CD8-positive, alpha-beta T cell (primary cell): ENCODE measurements at regions of chr3 and their contacts with region 1.

Region 1: GRCh38 chr3:161230621-161231171 is 9.6 kb downstream of the NMD3 start:
- DNase-seq: no peak
- ATAC-seq: no peak
- H3K4me3 ChIP-seq: no peak overlapping the region
- H3K4me3 Mint-ChIP-seq: no peak overlapping the region
- H3K27ac ChIP-seq: no peak overlapping the region
- H3K27ac Mint-ChIP-seq: no peak overlapping the region
- H3K4me1 ChIP-seq: no peaks in the 10 kb centered on the region
- H3K4me1 Mint-ChIP-seq: peaks cover 8% of the 10 kb centered on the region
- H3K27me3 ChIP-seq: no peaks in the 10 kb centered on the region
- H3K27me3 Mint-ChIP-seq: no peaks in the 10 kb centered on the region
- CTCF ChIP-seq: no peak

Region 2: GRCh38 chr3:161096771-161097355 is 133.8 kb before region 1 on chr3:
- CTCF ChIA-PET with region 1: no interaction called
- POLR2A ChIA-PET with region 1: no interaction called
- intact Hi-C with region 1: no loop called
- DNase-seq: peak in 3 of 9 experiments; percentile 19 to 40 (median 28)
- ATAC-seq: no peak
- H3K4me3 ChIP-seq: no peak overlapping the region
- H3K4me3 Mint-ChIP-seq: no peak overlapping the region
- H3K27ac ChIP-seq: no peak overlapping the region
- H3K27ac Mint-ChIP-seq: no peak overlapping the region
- H3K4me1 ChIP-seq: no peaks in the 10 kb centered on the region
- H3K4me1 Mint-ChIP-seq: no peaks in the 10 kb centered on the region
- H3K27me3 ChIP-seq: no peaks in the 10 kb centered on the region
- H3K27me3 Mint-ChIP-seq: no peaks in the 10 kb centered on the region
- CTCF ChIP-seq: no peak

Region 3: GRCh38 chr3:161253711-161254110 is 23.0 kb after region 1 on chr3:
- CTCF ChIA-PET with region 1: no interaction called
- POLR2A ChIA-PET with region 1: no interaction called
- intact Hi-C with region 1: loop called in 1 of 2 experiments (anchors 2 kb)
- DNase-seq: no peak
- ATAC-seq: no peak
- H3K4me3 ChIP-seq: no peak overlapping the region
- H3K4me3 Mint-ChIP-seq: no peak overlapping the region
- H3K27ac ChIP-seq: no peak overlapping the region
- H3K27ac Mint-ChIP-seq: no peak overlapping the region
- H3K4me1 ChIP-seq: no peaks in the 10 kb centered on the region
- H3K4me1 Mint-ChIP-seq: peaks cover 3% of the 10 kb centered on the region
- H3K27me3 ChIP-seq: no peaks in the 10 kb centered on the region
- H3K27me3 Mint-ChIP-seq: no peaks in the 10 kb centered on the region
- CTCF ChIP-seq: no peak